Transverse colon (tissue), 4 donors: ENCODE measurements at regions of chr13 and their contacts with region 1.

Region 1: GRCh38 chr13:39201180-39201579 is 162.9 kb downstream of the NHLRC3 start:
- DNase-seq: no peak
- H3K4me3 ChIP-seq: no peak overlapping the region
- H3K27ac ChIP-seq: no peak overlapping the region
- H3K4me1 ChIP-seq: no peaks in the 10 kb centered on the region
- H3K27me3 ChIP-seq: no peaks in the 10 kb centered on the region
- CTCF ChIP-seq: no peak
- EP300 ChIP-seq: no peak
- POLR2A ChIP-seq: no peak

Region 2: GRCh38 chr13:40490086-40490758 is 1289.0 kb after region 1 on chr13:
- in situ Hi-C with region 1: no loop called
- intact Hi-C with region 1: loop called (anchors 5 kb)
- DNase-seq: peak; percentile 41
- H3K4me3 ChIP-seq: no peak overlapping the region
- H3K27ac ChIP-seq: no peak overlapping the region
- H3K4me1 ChIP-seq: peaks cover 0 to 13% (median 0%) of the 10 kb centered on the region in 4 donors
- H3K27me3 ChIP-seq: no peaks in the 10 kb centered on the region
- CTCF ChIP-seq: no peak
- EP300 ChIP-seq: no peak
- POLR2A ChIP-seq: no peak